ENCODE measurements at regions of chr6 and their contacts with region 1.

Region 1: DNA sequence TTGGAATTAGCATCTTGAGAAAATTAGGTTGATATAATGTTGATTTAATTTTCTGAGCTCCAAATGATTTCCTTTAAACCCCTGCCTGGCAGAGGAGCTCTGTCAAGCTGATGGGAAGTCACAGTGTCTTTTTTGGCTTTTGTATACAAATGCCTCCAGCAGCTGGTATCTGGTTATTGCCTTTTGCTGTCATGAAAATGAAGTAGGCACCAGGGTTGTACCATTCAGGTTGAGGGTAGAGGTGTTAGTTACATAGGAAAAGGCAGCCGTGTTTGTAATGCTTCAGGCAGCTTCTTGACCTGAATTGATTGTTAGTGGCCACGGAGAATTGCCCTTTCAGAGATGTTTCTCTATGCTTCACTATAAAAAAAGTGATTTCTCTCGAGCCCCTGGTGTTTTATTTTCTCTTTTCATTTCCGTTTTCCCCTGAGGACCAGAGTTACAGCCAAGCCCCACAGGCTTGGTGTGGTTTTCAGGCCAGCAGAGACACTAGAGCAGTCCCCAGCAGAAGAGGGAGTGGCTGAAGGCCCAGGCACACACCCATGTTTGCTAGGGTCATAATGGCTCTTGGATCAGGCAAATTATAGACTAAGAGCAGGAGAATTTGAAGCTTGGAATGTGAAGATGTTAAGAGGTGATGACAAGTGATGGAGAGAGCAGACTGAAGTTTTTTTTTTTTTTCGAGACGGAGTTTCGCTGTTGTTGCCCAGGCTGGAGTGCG is 21.6 kb downstream of the CMTR1 start:
- DNase-seq: no peak
- ATAC-seq: no peak
- H3K4me3 ChIP-seq: no peak overlapping the region
- H3K27ac ChIP-seq: no peak overlapping the region
- H3K4me1 ChIP-seq: peaks cover under 1 to 9% of the 10 kb centered on the region in 2 experiments; a peak in 4 of 5 replicates
- H3K27me3 ChIP-seq: no peaks in the 10 kb centered on the region
- CTCF ChIP-seq: no peak
- EP300 ChIP-seq: no peak
- POLR2A ChIP-seq: no peak
- RAD21 ChIP-seq: no peak

Region 2: DNA sequence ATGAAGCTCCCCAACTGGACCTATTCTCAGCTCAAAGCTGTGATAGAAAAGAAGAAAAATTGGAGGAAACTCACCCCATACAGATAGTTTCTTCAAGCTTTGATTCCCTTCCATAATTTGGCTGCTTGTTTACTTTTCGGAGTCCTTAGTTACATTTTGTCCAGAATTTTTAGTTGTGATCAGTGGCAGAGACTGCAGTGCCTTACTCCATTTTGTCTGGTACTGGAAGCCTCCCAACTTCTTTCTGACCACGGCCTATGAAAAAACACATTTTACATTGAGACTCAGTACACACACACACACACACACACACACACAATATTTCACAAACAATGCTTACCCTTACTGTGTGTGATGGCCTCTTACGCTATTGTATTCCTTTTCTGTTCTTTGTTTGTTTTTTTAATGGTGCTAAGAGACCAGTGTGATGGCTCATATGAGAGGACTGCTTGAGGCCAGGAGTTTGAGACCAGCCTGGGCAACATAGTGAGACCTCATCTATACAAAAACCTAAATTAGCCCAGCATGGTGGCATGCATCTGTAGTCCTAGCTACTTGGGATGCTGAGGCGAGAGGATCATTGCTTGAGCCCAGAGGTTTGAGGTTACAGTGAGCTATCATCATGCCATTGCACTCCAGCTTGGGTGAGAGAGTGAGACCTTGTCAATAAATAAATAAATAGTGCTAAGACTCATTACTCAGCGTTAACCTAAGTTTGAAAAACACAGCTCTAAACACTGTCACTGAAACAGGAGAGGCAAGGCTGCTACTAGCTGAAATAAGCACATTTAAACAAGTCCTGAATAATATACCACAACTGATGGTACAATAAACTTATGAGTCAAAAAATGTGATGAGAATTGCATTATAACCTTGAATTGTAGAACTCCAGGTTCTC is 114.6 kb before region 1 on chr6:
- CTCF ChIA-PET with region 1: no interaction called
- POLR2A ChIA-PET with region 1: no interaction called
- in situ Hi-C with region 1: no loop called
- intact Hi-C with region 1: no loop called
- DNase-seq: no peak
- ATAC-seq: no peak
- H3K4me3 ChIP-seq: no peak overlapping the region
- H3K27ac ChIP-seq: no peak overlapping the region
- H3K4me1 ChIP-seq: no peaks in the 10 kb centered on the region
- H3K27me3 ChIP-seq: peaks cover 11 to 12% of the 10 kb centered on the region in 2 experiments; a peak in 3 of 5 replicates
- CTCF ChIP-seq: no peak
- EP300 ChIP-seq: no peak
- POLR2A ChIP-seq: no peak
- RAD21 ChIP-seq: no peak

Region 3: DNA sequence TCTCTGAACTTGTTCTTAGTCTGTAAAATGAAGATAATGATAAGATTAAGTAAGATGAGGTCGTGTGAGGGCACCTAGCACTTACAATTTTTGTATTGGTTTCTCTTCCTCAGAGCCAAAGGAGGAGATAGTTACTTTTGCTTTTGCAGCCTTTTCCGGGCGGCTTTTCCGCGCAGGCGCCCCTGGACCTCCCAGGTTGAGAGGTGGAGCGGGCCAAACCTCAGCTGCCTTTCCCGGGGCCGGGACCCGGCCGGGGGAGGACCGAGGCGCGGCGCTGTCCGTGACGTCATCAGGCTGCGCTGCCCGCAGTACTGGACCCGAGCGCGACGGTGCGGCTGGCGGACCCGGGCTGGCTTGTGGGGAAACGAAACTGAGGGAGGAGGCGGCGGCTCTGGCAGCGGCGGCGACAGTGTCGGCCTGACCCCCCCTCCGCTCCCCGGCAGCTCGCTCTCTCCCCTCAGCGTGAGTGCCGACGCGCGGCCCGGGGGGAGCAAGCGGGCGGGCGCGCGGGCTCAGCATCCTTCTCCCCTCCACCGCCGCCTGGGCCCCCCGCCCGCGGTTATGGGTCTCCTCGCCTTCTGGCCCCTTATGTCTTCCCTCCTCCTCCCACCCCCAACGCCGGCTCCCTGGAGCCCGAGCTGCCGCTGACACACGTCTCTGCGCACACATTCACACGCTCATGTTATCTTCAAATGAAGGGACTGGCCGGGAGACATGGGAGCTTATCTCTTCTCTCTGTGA is 21.5 kb before region 1 on chr6 and contains the start of gene CMTR1:
- CTCF ChIA-PET with region 1: no interaction called
- POLR2A ChIA-PET with region 1: interaction called, 15 read pairs
- in situ Hi-C with region 1: no loop called
- intact Hi-C with region 1: no loop called
- DNase-seq: peak; percentile 97 to 99 (median 99)
- ATAC-seq: peak; percentile 95
- H3K4me3 ChIP-seq: peak within 1 kb of the TSS; percentile 88
- H3K27ac ChIP-seq: peak within 1 kb of the TSS; percentile 83
- H3K4me1 ChIP-seq: peaks cover 14 to 22% of the 10 kb centered on the region in 2 experiments
- H3K27me3 ChIP-seq: no peaks in the 10 kb centered on the region
- CTCF ChIP-seq: peak in 1 of 3 experiments; percentile 3; a peak in 2 of 6 replicates
- EP300 ChIP-seq: peak; percentile 36; the same call in 1 of the 2 replicates
- POLR2A ChIP-seq: peak; percentile 85
- RAD21 ChIP-seq: peak in 1 of 2 experiments; percentile 22; a peak in 2 of 4 replicates
- polyA plus RNA-seq, gene CMTR1: 2.9 to 5.5 TPM

Region 4: GRCh38 chr6:37442416-37443215 is 12.0 kb before region 1 on chr6:
- CTCF ChIA-PET with region 1: no interaction called
- POLR2A ChIA-PET with region 1: interaction called, 11 read pairs
- in situ Hi-C with region 1: no loop called
- intact Hi-C with region 1: no loop called
- DNase-seq: no peak
- ATAC-seq: no peak
- H3K4me3 ChIP-seq: no peak overlapping the region
- H3K27ac ChIP-seq: no peak overlapping the region
- H3K4me1 ChIP-seq: no peaks in the 10 kb centered on the region
- H3K27me3 ChIP-seq: no peaks in the 10 kb centered on the region
- CTCF ChIP-seq: no peak
- EP300 ChIP-seq: no peak
- POLR2A ChIP-seq: no peak
- RAD21 ChIP-seq: no peak